A549 (cell line): ENCODE measurements at regions of chr12 and their contacts with region 1.

Region 1: GRCh38 chr12:51238510-51239334 is at the start of gene DAZAP2:
- DNase-seq: peak; percentile 94 to 98
- ATAC-seq: peak; percentile 97
- H3K4me3 ChIP-seq: peak within 1 kb of the TSS; percentile 90
- H3K27ac ChIP-seq: peak within 1 kb of the TSS; percentile 99 to 100
- H3K4me1 ChIP-seq: peaks cover 15% of the 10 kb centered on the region
- CTCF ChIP-seq: no peak
- EP300 ChIP-seq: no peak
- POLR2A ChIP-seq: peak; percentile 75
- RAD21 ChIP-seq: 0 out of 5 replicates have a peak, but pooled peaks of 1 of the 2 experiments have one; percentile 15
- polyA plus RNA-seq, gene DAZAP2: 375 and 459 TPM in 2 replicates

Region 2: GRCh38 chr12:51217968-51218606 is 20.6 kb before region 1 on chr12 and contains the start of gene POU6F1:
- CTCF ChIA-PET with region 1: interaction called, 12 read pairs
- POLR2A ChIA-PET with region 1: interaction called, 69 read pairs
- DNase-seq: peak; percentile 77 to 94
- ATAC-seq: peak; percentile 88 to 94
- H3K4me3 ChIP-seq: peak within 1 kb of the TSS; percentile 82
- H3K27ac ChIP-seq: peak within 1 kb of the TSS; percentile 96 to 97
- H3K4me1 ChIP-seq: peaks cover 21% of the 10 kb centered on the region
- CTCF ChIP-seq: no peak
- EP300 ChIP-seq: no peak
- POLR2A ChIP-seq: peak; percentile 22; the same call in 1 of the 2 replicates
- RAD21 ChIP-seq: no peak
- polyA plus RNA-seq, gene POU6F1: 1.3 and 1.7 TPM in 2 replicates

Region 3: GRCh38 chr12:51253276-51253675 is 14.6 kb after region 1 on chr12:
- CTCF ChIA-PET with region 1: interaction called, 10 read pairs
- POLR2A ChIA-PET with region 1: interaction called, 11 read pairs
- DNase-seq: no peak
- ATAC-seq: no peak
- H3K4me3 ChIP-seq: no peak overlapping the region
- H3K27ac ChIP-seq: no peak overlapping the region
- H3K4me1 ChIP-seq: no peaks in the 10 kb centered on the region
- CTCF ChIP-seq: no peak
- EP300 ChIP-seq: no peak
- POLR2A ChIP-seq: no peak
- RAD21 ChIP-seq: no peak

Region 4: DNA sequence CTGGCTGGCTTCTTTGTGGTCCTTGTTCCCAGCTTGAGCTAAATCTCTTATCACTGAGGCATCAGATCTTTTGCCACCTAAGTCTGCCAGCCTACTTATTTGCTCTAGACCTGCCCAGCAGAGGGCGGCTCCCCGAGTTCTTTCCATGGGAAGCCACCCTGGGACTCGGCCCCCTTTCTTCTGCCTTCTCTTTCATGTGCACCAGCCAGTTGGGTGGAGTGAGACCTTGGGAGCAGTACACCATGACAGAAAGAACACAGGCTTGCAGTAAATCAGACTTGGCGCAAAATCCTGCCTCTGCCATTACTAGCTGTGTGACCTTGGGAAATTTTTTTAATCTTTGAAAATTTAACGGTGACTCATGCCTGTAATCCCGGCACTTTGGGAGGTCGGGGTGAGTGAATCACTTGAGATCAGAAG is 24.0 kb after region 1 on chr12:
- CTCF ChIA-PET with region 1: interaction called, 17 read pairs
- POLR2A ChIA-PET with region 1: interaction called, 3 read pairs
- DNase-seq: peak; percentile 46 to 83
- ATAC-seq: peak; percentile 97 to 99
- H3K4me3 ChIP-seq: 0 out of 3 replicates have a peak overlapping the region, but pooled peaks have one; percentile 12
- H3K27ac ChIP-seq: peak overlapping the region in 1 of 2 experiments; percentile 44; a peak in 3 of 6 replicates
- H3K4me1 ChIP-seq: peaks cover 13% of the 10 kb centered on the region
- CTCF ChIP-seq: peak; percentile 66
- EP300 ChIP-seq: no peak
- POLR2A ChIP-seq: no peak
- RAD21 ChIP-seq: peak; percentile 55 to 62